Activated CD8-positive, alpha-beta T cell treated with anti-CD3 and anti-CD28 coated beads for 36 hours (primary cell): ENCODE measurements at regions of chr5 and their contacts with region 1.

Region 1: DNA sequence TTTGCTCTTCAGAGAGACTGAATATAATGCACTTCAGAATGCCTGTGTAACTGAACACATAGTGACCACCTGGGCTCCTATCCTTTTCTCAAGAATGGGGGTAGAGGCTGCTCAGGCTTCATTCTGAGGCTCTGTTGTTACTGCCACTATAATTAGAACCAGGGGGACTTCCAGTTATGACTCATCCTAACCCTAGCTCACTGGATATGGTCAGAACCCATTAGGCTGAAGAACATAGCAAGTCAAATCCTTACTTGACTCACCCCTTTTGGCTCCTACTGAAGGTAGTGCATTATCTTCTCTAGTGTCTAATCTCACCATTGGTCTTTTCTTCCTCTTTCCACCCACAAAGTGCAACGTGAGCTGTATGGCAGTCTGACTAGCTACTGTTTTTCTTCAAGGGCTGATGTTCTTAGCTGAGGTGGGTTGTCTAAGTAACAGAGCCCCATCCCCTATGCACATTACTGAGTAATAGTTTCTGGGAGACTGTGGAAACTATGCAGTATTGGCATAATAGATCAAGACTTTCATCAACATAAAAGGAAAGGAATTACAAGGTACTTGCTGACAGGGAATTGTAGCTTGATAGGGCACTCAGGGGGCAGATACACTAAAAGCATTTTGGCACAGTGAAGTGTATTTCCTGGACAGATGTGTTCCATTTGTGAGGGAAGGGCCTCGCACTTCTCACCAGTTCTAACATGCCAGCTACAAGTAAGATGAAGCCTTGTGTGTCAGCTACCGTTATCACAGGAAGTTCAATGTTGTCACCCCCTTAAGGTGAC is 431.0 kb upstream of the MEF2C start:
- DNase-seq: peak; percentile 51
- ATAC-seq: peak; percentile 95
- H3K4me3 Mint-ChIP-seq: no peak overlapping the region
- H3K27ac Mint-ChIP-seq: peak overlapping the region; percentile 87
- H3K4me1 Mint-ChIP-seq: peaks cover 24% of the 10 kb centered on the region
- H3K27me3 Mint-ChIP-seq: no peaks in the 10 kb centered on the region
- CTCF ChIP-seq: no peak

Region 2: GRCh38 chr5:88826646-88827585 is 487.1 kb before region 1 on chr5:
- CTCF ChIA-PET with region 1: no interaction called
- POLR2A ChIA-PET with region 1: no interaction called
- intact Hi-C with region 1: loop called (anchors 5 kb)
- DNase-seq: peak; percentile 19
- ATAC-seq: peak; percentile 47
- H3K4me3 Mint-ChIP-seq: peak overlapping the region; percentile 53
- H3K27ac Mint-ChIP-seq: peak overlapping the region; percentile 83
- H3K4me1 Mint-ChIP-seq: peaks cover 50% of the 10 kb centered on the region
- H3K27me3 Mint-ChIP-seq: peaks cover 4% of the 10 kb centered on the region
- CTCF ChIP-seq: no peak